Sciatic nerve (tissue), 2 donors: ENCODE measurements at regions of chr5 and their contacts with region 1.

Region 1: GRCh38 chr5:5845403-5845802 is 422.9 kb downstream of the ICE1 start:
- DNase-seq: no peak
- ATAC-seq: no peak

Region 2: DNA sequence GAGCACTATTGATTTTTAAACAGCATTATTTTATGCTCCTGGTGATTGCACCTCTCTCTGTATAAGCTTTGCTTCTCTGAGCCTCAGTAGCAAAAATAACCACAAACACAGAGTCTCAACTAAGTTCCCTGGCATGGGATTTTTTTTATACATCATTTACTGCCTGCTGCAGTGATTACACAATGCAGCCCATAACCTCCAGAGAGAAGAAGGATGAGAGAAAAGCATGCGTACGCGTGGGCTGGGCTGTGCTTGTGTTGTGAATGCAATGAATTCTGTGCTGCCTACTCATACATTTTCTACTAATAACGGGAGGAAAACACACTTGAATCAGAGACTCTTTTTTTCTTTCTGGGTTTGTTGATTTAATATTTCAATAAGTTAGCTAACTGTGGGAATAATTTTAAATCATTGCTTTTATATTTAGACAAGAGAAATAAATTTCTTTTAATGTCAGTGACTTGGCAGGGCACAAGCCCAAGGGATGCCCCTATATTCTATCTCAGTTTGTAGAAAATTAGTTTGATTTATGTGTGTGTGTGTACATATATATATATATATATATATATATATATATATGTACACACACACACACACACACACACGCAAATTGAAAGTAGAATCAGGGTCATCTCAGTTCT is 181.5 kb after region 1 on chr5:
- intact Hi-C with region 1: loop called (anchors 5 kb)
- DNase-seq: no peak
- ATAC-seq: peak; percentile 65

Region 3: GRCh38 chr5:6274846-6275543 is 429.6 kb after region 1 on chr5:
- intact Hi-C with region 1: no loop called
- DNase-seq: no peak
- ATAC-seq: no peak